Cardiac septum (tissue), 1 donor: ENCODE measurements at regions of chr1 and their contacts with region 1.

Region 1: GRCh38 chr1:7224644-7225043 is 439.4 kb downstream of the CAMTA1 start:
- DNase-seq: no peak

Region 2: GRCh38 chr1:7265771-7266648 is 41.4 kb after region 1 on chr1:
- intact Hi-C with region 1: no loop called
- DNase-seq: no peak

Region 3: DNA sequence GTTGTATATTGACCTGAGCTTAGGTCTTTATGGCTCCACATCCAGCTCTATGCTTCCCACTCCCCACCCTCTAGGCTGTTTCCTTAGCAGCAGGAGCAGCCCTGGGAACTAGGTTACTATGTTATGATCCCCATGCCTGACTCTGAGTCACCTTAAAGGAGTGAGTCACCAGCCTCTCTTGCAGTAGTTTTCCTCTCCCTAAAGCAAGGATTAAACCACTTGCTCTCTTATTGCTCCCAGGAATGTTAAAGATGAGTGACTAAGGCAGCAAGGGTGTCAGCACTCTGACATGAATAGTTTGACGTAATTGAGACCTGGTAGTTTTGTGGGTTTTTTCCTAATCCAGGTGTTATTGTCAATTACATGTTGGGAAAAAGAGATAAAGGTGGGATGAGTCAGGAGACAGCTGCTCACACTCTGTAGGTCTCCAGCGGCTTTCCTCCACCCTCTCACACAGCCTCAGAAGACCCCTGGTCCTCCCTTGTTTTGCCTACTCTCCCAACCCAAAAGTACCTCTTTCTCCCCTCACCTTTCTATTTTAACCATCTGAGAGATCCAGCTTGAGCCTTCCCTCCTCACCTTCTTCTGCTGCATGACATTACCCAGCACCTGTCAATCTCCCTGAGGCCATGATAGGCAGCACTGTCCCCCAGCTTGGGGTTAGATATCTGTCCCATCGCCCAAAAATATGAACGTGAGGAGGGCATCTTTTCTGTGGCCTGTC is 177.3 kb after region 1 on chr1:
- intact Hi-C with region 1: no loop called
- DNase-seq: no peak

Region 4: GRCh38 chr1:7641587-7642417 is 417.2 kb after region 1 on chr1:
- intact Hi-C with region 1: loop called (anchors 2 kb)
- DNase-seq: no peak